ENCODE measurements at regions of chr3 and their contacts with region 1.

Region 1: DNA sequence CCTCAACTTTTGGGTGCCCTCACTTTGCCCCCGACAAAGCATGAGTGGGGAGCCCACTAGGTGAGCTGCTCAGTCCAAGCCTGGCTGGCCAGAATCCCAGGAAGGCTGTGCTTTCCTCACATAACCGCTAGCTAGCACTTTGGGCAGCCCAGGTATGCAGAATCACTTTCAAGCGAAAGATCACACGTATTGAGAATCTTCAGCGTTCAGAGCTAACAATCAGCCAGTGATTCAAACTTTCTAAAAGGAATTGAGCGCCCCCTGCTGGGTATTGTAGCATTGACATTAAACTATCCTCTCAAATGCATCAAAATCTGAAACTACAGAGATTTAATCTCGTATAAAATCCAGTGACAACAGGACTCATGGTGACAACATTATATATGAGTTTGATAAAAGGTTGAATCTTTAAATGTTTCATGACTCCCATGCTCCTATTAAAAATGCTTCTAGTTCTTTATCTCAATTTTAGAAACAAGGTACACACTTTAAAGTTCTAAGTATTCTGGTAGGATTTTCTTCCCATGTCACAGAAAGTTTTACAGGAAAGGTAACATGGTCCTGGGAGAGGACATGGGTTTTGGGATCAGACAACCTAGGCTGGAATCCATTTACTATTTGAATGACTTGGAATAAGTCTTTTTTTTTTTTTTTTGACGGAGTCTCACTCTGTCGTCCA is 11.8 kb downstream of the ANAPC13 start:
- DNase-seq: peak; percentile 73 to 93 (median 82)
- H3K4me3 ChIP-seq: no peak overlapping the region
- H3K27ac ChIP-seq: no peak overlapping the region
- H3K4me1 ChIP-seq: peaks cover 0 to 23% (median 20%) of the 10 kb centered on the region in 3 donors
- H3K27me3 ChIP-seq: no peaks in the 10 kb centered on the region
- CTCF ChIP-seq: peak; percentile 80

Region 2: DNA sequence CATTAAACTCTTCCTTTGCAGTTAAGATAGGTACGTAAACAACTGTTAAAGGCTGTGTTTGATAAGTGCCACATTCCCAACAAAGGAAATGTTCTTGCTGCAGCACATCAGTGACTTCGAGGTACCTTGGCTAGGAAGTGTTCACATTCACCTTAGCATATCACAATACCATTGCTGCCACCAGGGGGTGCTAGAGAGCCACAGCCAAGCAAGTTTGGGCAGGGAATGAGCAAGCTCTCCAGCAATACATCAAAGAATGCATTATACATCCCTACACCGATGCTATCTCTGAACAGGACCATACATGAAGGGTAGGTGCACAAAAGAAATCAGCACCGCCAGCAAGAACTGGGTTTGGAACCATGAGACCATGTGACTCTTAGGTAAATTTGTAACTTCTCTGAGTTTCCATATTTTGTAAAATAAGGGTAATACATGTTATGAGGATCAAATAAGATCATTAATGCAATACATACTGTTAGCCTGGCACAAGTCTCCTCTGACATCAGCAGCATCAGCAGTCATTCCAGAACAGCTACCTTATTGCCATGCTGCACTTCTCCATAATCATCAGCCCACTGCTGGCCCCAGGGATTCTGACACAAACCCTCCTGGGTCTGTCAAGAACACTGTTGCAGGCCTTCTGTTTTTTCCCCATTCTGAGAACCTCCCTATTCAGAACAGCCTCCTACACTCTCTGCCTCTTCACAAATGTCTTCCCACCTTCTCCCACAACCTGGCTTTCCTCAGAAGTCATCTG is 260.9 kb before region 1 on chr3:
- intact Hi-C with region 1: loop called (anchors 10 kb)
- DNase-seq: peak; percentile 85 to 91 (median 88)
- H3K4me3 ChIP-seq: no peak overlapping the region
- H3K27ac ChIP-seq: no peak overlapping the region
- H3K4me1 ChIP-seq: no peaks in the 10 kb centered on the region
- H3K27me3 ChIP-seq: no peaks in the 10 kb centered on the region
- CTCF ChIP-seq: peak; percentile 90

Region 3: GRCh38 chr3:134308350-134308891 is 165.6 kb before region 1 on chr3:
- intact Hi-C with region 1: loop called (anchors 5 kb)
- DNase-seq: peak; percentile 88 to 92 (median 89)
- H3K4me3 ChIP-seq: peak overlapping the region; percentile 35 to 47 (median 45)
- H3K27ac ChIP-seq: peak overlapping the region in 1 of 2 donors; percentile 2
- H3K4me1 ChIP-seq: peaks cover 2 to 45% (median 26%) of the 10 kb centered on the region in 3 donors
- H3K27me3 ChIP-seq: no peaks in the 10 kb centered on the region
- CTCF ChIP-seq: peak; percentile 99

Region 4: DNA sequence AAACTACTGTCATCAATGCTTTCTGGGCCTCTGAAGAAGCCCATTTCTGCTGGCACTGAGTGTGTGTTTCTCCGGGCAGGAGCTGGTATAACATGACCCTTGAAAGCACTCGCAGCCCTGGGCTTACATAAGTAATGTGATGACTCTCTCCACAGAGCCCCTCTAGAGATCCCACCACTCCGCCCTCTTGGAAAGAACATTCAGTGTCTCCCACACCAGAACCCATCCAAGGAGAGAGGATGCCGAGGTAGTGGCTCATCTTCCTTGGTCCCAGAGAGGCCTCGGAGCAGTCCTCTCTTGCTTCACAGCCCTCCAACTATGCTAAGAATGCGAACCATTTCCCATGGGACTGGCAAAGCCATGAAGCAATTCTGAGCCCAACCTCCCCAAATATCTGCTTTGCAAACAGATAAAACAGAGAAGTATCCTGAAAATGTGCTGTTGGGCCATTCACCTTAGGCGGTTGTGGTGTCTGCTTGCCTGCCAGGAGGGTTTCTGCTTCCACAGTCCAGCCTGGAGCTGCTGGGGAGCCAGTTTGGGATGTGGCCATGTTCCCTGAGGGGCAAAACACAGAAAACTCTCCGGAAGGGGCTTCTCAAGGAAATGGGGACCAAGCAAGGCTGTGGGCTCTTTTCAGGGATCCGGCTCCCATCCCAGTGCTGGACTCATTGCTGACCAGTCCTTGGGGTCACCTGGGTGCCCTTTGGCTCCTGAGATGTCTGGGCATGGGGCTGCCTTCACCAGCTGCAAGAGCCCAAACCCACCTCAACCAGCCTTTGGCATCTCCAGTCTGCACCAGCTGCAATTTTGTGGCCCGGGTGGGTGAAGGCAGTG is 147.0 kb before region 1 on chr3:
- intact Hi-C with region 1: no loop called
- DNase-seq: peak; percentile 62 to 94 (median 79)
- H3K4me3 ChIP-seq: no peak overlapping the region
- H3K27ac ChIP-seq: peak overlapping the region; percentile 29 to 66
- H3K4me1 ChIP-seq: peaks cover 2 to 30% (median 30%) of the 10 kb centered on the region in 3 donors
- H3K27me3 ChIP-seq: no peaks in the 10 kb centered on the region
- CTCF ChIP-seq: no peak

Region 5: GRCh38 chr3:134373994-134374790 is 99.8 kb before region 1 on chr3 and contains the start of gene AMOTL2:
- intact Hi-C with region 1: loop called (anchors 10 kb)
- DNase-seq: peak; percentile 97 to 99 (median 98)
- H3K4me3 ChIP-seq: peak within 1 kb of the TSS; percentile 67 to 95 (median 86)
- H3K27ac ChIP-seq: peak within 1 kb of the TSS; percentile 97 to 99
- H3K4me1 ChIP-seq: peaks cover 7 to 51% (median 49%) of the 10 kb centered on the region in 3 donors
- H3K27me3 ChIP-seq: no peaks in the 10 kb centered on the region
- CTCF ChIP-seq: no peak
- total RNA-seq, gene AMOTL2: 83.5 TPM

Region 6: DNA sequence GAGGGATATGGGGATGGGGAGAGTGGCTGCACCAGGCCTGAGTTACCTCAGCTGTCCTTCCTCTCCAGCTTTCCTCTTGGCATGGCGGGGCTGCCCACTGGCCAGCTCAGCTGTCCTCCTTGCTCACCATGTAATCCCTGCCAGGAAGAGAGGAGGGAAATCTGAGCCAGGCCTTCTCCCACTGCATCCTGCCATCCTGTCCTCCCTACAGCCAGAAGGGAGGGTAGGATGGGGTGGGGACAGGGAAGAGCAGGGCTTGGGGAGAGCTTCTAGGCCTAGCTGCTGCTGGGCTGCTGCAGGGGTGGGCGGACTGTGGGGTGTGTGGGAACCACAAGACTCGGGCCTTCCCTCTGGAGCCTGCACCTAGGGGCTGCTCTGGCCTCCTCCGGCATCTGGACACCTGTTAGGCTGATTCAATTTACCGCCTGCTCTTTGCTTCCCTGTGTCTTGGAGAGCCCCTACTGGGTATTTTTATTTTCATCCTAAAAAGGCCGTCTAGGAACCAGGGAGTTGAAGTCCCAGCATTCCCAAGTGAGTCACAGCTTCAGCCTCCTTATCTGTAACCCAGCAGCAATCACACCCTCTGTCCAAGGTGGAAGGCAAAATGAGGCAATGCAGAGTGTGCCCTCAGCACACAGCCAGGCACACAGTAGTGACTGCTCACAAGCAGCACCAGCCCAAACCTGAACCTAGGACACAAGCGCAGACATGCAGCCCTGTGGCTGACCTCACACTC is 189.9 kb after region 1 on chr3:
- intact Hi-C with region 1: no loop called
- DNase-seq: peak in 3 of 5 donors; percentile 44 to 66 (median 62)
- H3K4me3 ChIP-seq: no peak overlapping the region
- H3K27ac ChIP-seq: no peak overlapping the region
- H3K4me1 ChIP-seq: peaks cover 0 to 3% (median 0%) of the 10 kb centered on the region in 3 donors
- H3K27me3 ChIP-seq: no peaks in the 10 kb centered on the region
- CTCF ChIP-seq: no peak

Region 7: DNA sequence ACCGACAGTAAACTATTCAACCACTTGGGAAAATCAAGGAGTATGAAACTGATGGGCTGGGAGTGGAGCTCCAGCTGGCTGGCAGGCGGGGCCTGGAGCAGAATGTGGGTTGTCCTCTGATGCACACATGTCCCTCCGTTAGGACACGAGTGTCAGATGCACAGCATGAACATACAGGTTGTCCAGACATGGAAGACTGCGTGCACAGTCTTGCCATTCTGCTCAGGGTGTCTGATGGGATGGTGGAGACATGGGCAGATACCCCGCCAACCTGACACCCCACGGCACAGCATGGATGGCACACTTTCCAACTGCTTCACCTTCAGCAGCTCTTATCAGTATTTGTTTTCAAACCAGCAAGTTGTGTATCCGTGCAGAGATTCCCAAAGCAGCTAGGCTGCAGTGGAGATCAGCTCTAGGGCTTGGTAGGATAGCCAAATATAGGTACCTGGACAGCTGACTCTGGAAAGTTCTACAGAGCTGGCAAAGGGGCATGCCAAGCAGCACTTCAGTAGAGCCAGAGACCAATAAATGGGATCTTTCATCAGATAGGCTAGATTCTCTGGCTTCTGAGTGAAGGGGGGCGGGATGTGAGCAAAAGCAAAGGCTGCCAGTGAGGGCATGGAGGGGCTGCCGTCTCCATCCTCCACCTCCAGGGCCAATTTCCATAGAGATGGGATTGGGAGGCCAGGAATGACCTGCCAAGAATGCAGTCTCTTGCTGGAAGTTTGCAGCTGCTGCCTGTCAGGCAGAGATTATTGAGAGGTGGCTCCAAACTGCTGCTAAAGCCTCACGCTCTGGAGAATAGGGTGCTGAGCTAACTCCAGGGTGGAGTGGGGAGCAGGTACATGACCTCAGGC is 224.1 kb after region 1 on chr3:
- intact Hi-C with region 1: no loop called
- DNase-seq: no peak
- H3K4me3 ChIP-seq: no peak overlapping the region
- H3K27ac ChIP-seq: no peak overlapping the region
- H3K4me1 ChIP-seq: no peaks in the 10 kb centered on the region
- H3K27me3 ChIP-seq: no peaks in the 10 kb centered on the region
- CTCF ChIP-seq: no peak